Heart right ventricle (tissue), 16 donors: ENCODE measurements at regions of chr11 and their contacts with region 1.

Region 1: DNA sequence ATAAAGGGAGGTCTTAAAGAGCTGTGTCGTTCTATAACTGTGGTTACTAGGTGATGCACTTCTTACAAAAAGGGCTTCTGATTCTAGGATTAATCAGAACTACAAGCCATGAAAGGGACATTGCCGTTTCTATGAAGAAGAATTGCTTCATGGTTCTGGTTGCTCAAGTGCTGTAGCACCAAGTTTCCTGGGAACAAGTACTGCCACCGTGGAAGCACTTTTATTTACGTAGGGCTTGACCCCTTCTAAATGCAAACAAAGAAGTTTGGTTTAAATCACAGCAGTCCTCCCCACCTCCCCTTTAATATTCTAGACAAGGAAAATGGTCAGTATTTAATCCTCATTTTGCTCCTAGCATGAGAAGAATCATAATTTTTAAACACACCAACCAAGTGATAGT is 9.8 kb downstream of the YAP1 start:
- DNase-seq: no peak
- ATAC-seq: peak in 1 of 8 donors; percentile 15
- H3K4me3 ChIP-seq: no peak overlapping the region
- H3K27ac ChIP-seq: peak overlapping the region in 1 of 10 donors; percentile 23
- H3K4me1 ChIP-seq: peaks cover 2 to 60% (median 52%) of the 10 kb centered on the region in 9 donors
- H3K27me3 ChIP-seq: peaks cover 0 to 30% (median 0%) of the 10 kb centered on the region in 7 donors
- CTCF ChIP-seq: no peak

Region 2: DNA sequence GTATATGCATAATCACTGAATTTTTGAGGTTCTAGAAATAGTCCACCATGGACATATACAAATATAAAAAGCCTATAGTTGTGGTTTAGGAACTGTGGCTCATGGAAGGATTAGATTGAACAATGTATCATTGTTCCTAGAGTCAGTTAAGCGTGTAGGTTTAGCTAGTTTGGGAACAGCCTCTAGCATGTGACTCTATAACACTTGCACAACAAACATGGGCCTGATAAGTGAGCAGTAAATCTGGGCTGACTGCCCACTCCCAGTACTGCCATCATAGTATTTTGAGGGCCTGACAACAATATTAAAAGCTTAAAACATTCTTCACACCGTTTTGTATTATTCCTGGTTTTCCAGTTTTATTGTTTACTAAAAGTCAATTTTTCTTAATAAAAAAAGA is 37.2 kb after region 1 on chr11:
- intact Hi-C with region 1: loop called in 1 of 10 experiments (anchors 5 kb)
- DNase-seq: peak; percentile 21 to 67
- ATAC-seq: peak; percentile 59 to 98 (median 92)
- H3K4me3 ChIP-seq: no peak overlapping the region
- H3K27ac ChIP-seq: peak overlapping the region in 5 of 10 donors; percentile 14 to 53 (median 42)
- H3K4me1 ChIP-seq: peaks cover 5 to 82% (median 54%) of the 10 kb centered on the region in 9 donors
- H3K27me3 ChIP-seq: no peaks in the 10 kb centered on the region
- CTCF ChIP-seq: no peak